Activated naive CD8-positive, alpha-beta T cell treated with anti-CD3 and anti-CD28 coated beads, Interleukin-2, amount 10 ng/mL, durations not matched to agents 7 days and 5 days (primary cell): ENCODE measurements at regions of chr16 and their contacts with region 1.

Region 1: DNA sequence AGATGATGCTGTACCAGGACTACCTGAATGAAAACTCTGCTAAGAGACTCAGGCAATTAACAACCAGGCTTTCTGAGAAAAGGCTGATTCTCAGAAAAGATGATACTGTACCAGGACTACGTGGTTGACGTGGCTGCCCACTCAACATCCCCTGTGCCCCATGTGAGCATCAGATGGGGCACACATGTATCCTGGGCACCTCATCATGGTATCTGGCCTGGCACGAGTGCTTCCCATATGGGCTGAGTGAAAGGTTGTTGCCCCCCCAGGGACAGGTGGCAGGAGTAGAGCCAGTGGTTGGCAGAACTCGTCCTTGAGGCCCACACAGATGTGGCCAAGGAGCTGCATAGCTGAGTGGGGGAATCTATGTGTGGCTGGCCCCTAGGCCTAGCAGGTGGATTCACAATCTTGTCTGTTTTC is 3.5 kb upstream of the CES4A start:
- DNase-seq: peak; percentile 71
- ATAC-seq: peak; percentile 93
- H3K4me3 Mint-ChIP-seq: peak overlapping the region; percentile 40
- H3K27ac Mint-ChIP-seq: peak overlapping the region; percentile 97
- H3K4me1 Mint-ChIP-seq: peaks cover 59% of the 10 kb centered on the region
- H3K27me3 Mint-ChIP-seq: no peaks in the 10 kb centered on the region

Region 2: DNA sequence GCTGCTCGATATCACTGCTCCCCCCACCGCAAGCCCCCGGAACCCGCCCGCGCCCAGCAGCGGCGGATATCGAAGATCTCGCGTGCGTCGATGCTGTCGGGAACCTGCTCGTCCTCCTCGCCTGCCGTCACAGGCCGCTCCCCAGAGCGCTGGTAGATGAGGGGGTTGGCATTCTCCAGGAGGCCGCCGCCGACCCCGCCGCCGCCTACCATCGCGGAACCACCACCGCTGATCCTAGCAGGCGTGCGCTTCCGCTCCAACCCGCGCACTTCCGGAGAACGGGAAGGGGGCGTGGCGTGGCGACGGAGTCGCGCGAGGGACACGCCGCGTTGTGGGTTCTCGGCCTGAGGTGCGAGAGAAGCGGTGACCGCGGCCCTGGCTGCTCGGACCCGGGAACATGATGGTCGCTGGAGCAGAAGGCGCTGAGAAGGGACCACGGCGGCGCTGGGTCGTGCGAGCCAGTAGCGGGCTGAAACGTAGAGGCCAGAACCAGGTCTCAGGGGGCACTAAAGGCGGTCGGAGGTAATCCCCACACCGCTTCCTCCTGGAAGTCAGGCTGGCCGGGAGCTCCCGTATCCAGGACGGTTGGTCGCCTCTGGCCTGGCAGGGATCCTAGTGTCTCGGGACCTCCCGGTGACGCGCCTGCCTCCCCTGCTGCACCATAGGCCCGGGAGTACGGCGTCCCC is 50.6 kb before region 1 on chr16 and contains the start of gene CIAO2B:
- POLR2A ChIA-PET with region 1: no interaction called
- DNase-seq: peak; percentile 94
- ATAC-seq: peak; percentile 84
- H3K4me3 Mint-ChIP-seq: peak within 1 kb of the TSS; percentile 97
- H3K27ac Mint-ChIP-seq: peak within 1 kb of the TSS; percentile 96
- H3K4me1 Mint-ChIP-seq: peaks cover 34% of the 10 kb centered on the region
- H3K27me3 Mint-ChIP-seq: no peaks in the 10 kb centered on the region
- total RNA-seq, gene CIAO2B: 98.0 to 106 TPM

Region 3: GRCh38 chr16:67000384-67001351 is 15.8 kb after region 1 on chr16:
- POLR2A ChIA-PET with region 1: interaction called, 20 read pairs
- DNase-seq: peak; percentile 77
- ATAC-seq: peak; percentile 65
- H3K4me3 Mint-ChIP-seq: peak overlapping the region; percentile 81
- H3K27ac Mint-ChIP-seq: peak overlapping the region; percentile 76
- H3K4me1 Mint-ChIP-seq: peaks cover 28% of the 10 kb centered on the region
- H3K27me3 Mint-ChIP-seq: peaks cover 5% of the 10 kb centered on the region

Region 4: DNA sequence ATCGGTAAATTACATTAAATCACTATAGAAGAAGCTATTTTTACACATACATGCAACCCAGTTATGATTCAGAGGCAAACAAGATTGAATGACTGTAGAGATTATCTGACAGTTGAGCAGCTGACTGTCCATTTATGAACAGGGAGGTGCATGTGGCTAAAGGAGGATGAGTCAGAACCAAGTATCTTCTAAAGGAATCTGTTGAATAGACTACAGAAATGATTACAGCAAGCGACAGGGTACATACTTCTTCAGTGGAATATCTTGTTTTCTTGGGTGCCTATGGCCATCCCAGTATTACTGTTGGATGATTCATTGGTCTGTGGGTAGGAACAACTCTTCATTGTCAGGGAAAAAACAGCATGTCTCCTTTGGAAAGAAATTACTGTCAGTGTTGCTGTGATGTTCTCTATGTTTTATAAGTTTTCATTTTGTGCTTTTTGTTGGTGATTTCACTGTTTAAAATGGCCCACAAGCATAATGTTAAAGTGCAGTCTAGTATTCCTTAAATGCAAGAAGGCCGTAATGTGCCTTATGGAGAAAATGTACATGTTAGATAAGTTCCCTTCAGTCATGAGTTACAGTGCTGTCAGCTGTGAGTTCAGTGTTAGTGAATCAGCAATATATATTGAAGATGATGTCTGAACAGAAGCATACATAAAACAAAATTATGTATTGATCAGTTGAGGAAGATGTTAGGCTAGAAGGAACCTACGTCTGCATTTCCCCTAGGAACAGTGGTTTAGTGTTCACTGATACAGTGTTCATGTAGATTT is 71.0 kb after region 1 on chr16:
- POLR2A ChIA-PET with region 1: no interaction called
- DNase-seq: no peak
- ATAC-seq: no peak
- H3K4me3 Mint-ChIP-seq: no peak overlapping the region
- H3K27ac Mint-ChIP-seq: no peak overlapping the region
- H3K4me1 Mint-ChIP-seq: peaks cover 40% of the 10 kb centered on the region
- H3K27me3 Mint-ChIP-seq: no peaks in the 10 kb centered on the region